ENCODE measurements at regions of chr3 and their contacts with region 1.

Region 1: DNA sequence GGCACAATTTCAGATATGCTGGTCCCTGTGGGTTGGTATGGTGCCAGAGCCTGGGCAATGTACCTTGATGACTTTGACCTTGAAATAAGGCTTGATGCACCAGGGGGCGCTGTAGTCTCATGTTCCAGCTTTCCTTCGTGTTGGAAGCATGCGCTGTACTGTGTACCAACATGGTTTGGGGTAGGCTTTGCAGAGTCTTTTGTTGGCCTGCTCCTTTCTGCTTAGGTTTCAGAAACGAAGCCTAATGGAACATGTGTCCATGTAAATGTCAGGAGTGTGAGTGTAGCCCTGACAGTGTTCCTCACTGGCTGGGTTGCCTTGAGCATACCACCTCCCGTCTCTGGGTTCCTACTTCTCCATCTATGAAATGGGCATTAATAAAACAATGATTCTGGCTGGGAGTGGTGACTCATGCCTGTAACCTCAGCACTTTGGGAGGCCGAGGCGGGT is 3.6 kb upstream of the CCR4 start:
- DNase-seq: peak; percentile 88
- H3K4me3 ChIP-seq: no peak overlapping the region
- H3K27ac ChIP-seq: no peak overlapping the region
- H3K4me1 ChIP-seq: no peaks in the 10 kb centered on the region
- CTCF ChIP-seq: peak; percentile 92

Region 2: GRCh38 chr3:33063651-33064051 is 115.8 kb after region 1 on chr3:
- CTCF ChIA-PET with region 1: interaction called, 5 read pairs
- POLR2A ChIA-PET with region 1: interaction called, 5 read pairs
- intact Hi-C with region 1: loop called (anchors 1 kb)
- DNase-seq: peak; percentile 60
- H3K4me3 ChIP-seq: no peak overlapping the region
- H3K27ac ChIP-seq: peak overlapping the region; percentile 48
- H3K4me1 ChIP-seq: peaks cover 67% of the 10 kb centered on the region
- CTCF ChIP-seq: no peak

Region 3: DNA sequence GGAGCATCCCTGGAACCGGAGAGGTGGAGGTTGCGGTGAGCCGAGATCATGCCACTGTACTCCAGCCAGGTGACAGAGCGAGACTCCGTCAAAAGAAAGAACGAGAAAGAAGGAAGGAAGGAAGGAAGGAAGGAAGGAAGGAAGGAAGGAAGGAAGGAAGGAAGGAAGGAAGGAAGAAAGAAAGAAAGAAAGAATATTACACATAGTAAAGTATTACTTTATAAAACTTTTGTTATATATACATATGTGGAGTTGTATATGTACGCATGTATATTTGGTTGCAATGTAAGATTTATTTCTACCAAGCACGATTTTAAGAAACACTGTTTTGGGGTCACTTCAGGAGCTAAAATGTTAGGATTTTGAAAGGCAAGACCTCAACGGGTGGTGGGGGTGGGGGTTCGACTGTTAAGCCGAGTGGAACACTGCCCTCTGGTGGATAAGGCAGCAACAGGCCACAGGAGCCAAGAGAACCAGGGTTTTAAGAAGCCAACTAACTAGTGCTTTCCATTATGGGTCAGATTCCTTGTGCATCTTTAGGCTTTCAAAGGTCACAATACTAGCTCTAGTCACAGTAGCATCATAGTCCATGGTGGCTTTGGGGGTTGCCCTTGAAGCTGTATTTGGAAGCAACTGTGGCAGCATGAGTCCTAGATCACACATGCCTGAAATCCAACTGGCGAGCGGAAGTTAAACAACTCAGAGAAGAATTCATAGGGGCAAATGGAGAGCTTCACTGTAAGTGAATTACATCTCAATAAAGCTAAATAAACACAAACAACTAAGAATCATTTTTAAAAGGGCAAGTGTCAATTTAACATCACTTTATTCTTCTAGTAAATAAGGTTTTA is 126.6 kb after region 1 on chr3:
- CTCF ChIA-PET with region 1: interaction called, 10 read pairs
- POLR2A ChIA-PET with region 1: interaction called, 5 read pairs
- intact Hi-C with region 1: loop called (anchors 1 kb)
- DNase-seq: peak; percentile 80
- H3K4me3 ChIP-seq: no peak overlapping the region
- H3K27ac ChIP-seq: no peak overlapping the region
- H3K4me1 ChIP-seq: no peaks in the 10 kb centered on the region
- CTCF ChIP-seq: peak; percentile 98

Region 4: GRCh38 chr3:33372218-33373081 is 424.6 kb after region 1 on chr3:
- CTCF ChIA-PET with region 1: no interaction called
- POLR2A ChIA-PET with region 1: no interaction called
- intact Hi-C with region 1: loop called (anchors 2 kb)
- DNase-seq: peak; percentile 60
- H3K4me3 ChIP-seq: no peak overlapping the region
- H3K27ac ChIP-seq: no peak overlapping the region
- H3K4me1 ChIP-seq: no peaks in the 10 kb centered on the region
- CTCF ChIP-seq: peak; percentile 97

Region 5: DNA sequence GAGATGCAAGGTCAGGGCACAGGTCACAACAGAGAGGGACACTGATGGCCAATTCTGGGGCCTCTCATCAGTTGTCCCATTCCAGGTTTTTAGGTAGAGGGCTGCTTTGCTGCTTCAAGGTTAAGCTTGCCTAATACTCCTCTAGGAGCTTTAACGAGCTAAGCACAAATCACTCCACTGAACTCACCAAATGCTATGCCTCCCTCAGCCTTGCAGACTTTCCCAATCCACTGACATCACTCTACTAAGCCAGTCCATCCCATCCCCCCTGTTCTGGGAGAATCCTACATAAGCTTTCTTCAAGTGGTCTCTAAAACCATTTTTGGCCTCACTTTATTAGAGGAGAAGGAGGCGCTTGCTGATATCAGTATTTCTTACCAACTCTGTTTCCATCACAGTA is 825.8 kb after region 1 on chr3:
- CTCF ChIA-PET with region 1: no interaction called
- POLR2A ChIA-PET with region 1: no interaction called
- intact Hi-C with region 1: loop called (anchors 10 kb)
- DNase-seq: no peak
- H3K4me3 ChIP-seq: no peak overlapping the region
- H3K27ac ChIP-seq: no peak overlapping the region
- H3K4me1 ChIP-seq: no peaks in the 10 kb centered on the region
- CTCF ChIP-seq: no peak